ENCODE measurements at regions of chr18 and their contacts with region 1.

Region 1: GRCh38 chr18:23095463-23095862 is 39.8 kb upstream of the CABLES1 start:
- DNase-seq: no peak
- ATAC-seq: no peak
- H3K4me3 ChIP-seq: no peak overlapping the region
- H3K4me3 Mint-ChIP-seq: no peak overlapping the region
- H3K27ac ChIP-seq: no peak overlapping the region
- H3K27ac Mint-ChIP-seq: no peak overlapping the region
- H3K4me1 ChIP-seq: peaks cover 0 to 6% of the 10 kb centered on the region in 2 donors
- H3K4me1 Mint-ChIP-seq: peaks cover 5 to 13% (median 10%) of the 10 kb centered on the region in 7 donors
- H3K27me3 ChIP-seq: no peaks in the 10 kb centered on the region
- H3K27me3 Mint-ChIP-seq: peaks cover 0 to 19% (median 0%) of the 10 kb centered on the region in 5 donors

Region 2: GRCh38 chr18:22831441-22831904 is 264.0 kb before region 1 on chr18:
- CTCF ChIA-PET with region 1: no interaction called
- POLR2A ChIA-PET with region 1: no interaction called
- intact Hi-C with region 1: no loop called
- DNase-seq: no peak
- ATAC-seq: peak; percentile 26
- H3K4me3 ChIP-seq: no peak overlapping the region
- H3K4me3 Mint-ChIP-seq: no peak overlapping the region
- H3K27ac ChIP-seq: no peak overlapping the region
- H3K27ac Mint-ChIP-seq: no peak overlapping the region
- H3K4me1 ChIP-seq: no peaks in the 10 kb centered on the region
- H3K4me1 Mint-ChIP-seq: peaks cover 0 to 2% (median 0%) of the 10 kb centered on the region in 7 donors
- H3K27me3 ChIP-seq: peaks cover 0 to 5% of the 10 kb centered on the region in 2 donors
- H3K27me3 Mint-ChIP-seq: peaks cover 17 to 36% (median 28%) of the 10 kb centered on the region in 5 donors

Region 3: DNA sequence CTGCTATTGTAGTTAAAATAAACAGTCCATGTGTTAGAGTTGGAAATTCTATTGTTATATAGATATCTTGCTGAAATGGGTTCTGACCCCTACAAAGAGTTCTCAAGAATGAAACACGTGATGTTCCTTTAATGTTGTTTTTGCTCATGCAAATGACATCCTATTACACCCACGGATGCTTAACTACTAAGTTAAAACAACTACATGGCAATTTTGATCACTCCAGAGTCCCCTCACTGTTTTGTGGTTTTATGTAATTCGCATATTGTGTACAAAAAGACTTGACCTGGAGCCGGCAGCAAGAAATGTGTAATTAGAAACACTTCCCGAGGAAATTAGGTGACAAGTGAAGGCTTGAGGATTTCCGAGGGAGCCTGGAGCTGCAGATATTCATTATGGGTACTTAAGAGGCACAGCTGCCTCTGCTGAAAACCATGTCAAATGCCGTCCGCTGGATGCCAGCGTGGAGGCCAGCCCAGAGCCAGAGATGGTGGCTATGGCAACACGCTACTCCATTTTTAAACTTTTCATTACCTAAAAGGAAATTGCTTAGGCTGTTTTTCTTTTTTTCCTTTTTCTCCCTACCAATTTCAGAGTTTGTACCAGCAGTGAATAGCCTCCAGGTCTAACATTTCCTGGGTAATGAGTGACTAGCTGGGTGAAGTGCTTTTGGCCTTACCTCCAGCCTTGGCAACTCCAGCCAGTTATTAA is 18.9 kb after region 1 on chr18:
- CTCF ChIA-PET with region 1: interaction called, 3 read pairs
- POLR2A ChIA-PET with region 1: no interaction called
- intact Hi-C with region 1: loop called in 1 of 2 experiments (anchors 1 kb)
- DNase-seq: peak in 5 of 9 donors; percentile 6 to 33 (median 18)
- ATAC-seq: no peak
- H3K4me3 ChIP-seq: no peak overlapping the region
- H3K4me3 Mint-ChIP-seq: peak overlapping the region in 7 of 10 donors; percentile 11 to 62 (median 41)
- H3K27ac ChIP-seq: no peak overlapping the region
- H3K27ac Mint-ChIP-seq: peak overlapping the region in 4 of 9 donors; percentile 7 to 82 (median 16)
- H3K4me1 ChIP-seq: peaks cover 0 to 14% of the 10 kb centered on the region in 2 donors
- H3K4me1 Mint-ChIP-seq: peaks cover 6 to 25% (median 23%) of the 10 kb centered on the region in 7 donors
- H3K27me3 ChIP-seq: no peaks in the 10 kb centered on the region
- H3K27me3 Mint-ChIP-seq: peaks cover 0 to 30% (median 3%) of the 10 kb centered on the region in 5 donors

Region 4: GRCh38 chr18:24982831-24983230 is 1887.4 kb after region 1 on chr18:
- CTCF ChIA-PET with region 1: no interaction called
- POLR2A ChIA-PET with region 1: no interaction called
- intact Hi-C with region 1: no loop called
- DNase-seq: no peak
- ATAC-seq: no peak
- H3K4me3 ChIP-seq: no peak overlapping the region
- H3K4me3 Mint-ChIP-seq: no peak overlapping the region
- H3K27ac ChIP-seq: no peak overlapping the region
- H3K27ac Mint-ChIP-seq: no peak overlapping the region
- H3K4me1 ChIP-seq: no peaks in the 10 kb centered on the region
- H3K4me1 Mint-ChIP-seq: no peaks in the 10 kb centered on the region
- H3K27me3 ChIP-seq: no peaks in the 10 kb centered on the region
- H3K27me3 Mint-ChIP-seq: peaks cover 0 to 23% (median 4%) of the 10 kb centered on the region in 5 donors